Right ventricle myocardium inferior (tissue), 1 donor: ENCODE measurements at regions of chr11 and their contacts with region 1.

Region 1: GRCh38 chr11:10307442-10308207 is 2.8 kb downstream of the ADM start:
- DNase-seq: peak; percentile 92
- ATAC-seq: peak; percentile 66

Region 2: GRCh38 chr11:9613118-9613829 is 694.4 kb before region 1 on chr11:
- intact Hi-C with region 1: loop called (anchors 5 kb)
- DNase-seq: peak; percentile 96
- ATAC-seq: peak; percentile 93

Region 3: GRCh38 chr11:9861860-9862725 is 445.5 kb before region 1 on chr11:
- intact Hi-C with region 1: loop called (anchors 5 kb)
- DNase-seq: no peak
- ATAC-seq: peak; percentile 70

Region 4: DNA sequence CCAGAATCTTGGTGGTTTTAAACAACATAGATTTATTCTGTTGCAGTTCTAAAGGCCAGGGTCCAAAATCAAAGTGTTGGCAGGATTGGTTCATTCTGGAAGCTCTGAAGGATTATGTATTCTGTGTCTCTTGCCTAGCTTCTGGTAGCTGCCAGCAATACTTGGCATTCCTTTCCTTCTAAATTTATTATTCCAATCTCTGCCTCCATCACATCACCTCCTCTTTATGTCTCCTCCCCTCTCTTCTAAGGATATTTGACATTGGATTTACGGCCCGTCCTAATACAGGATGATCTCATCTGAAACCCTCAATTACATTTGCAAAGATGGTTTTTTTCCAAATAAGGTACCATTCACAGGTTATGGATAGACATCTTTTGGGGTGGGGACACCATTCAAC is 200.1 kb before region 1 on chr11:
- intact Hi-C with region 1: no loop called
- DNase-seq: no peak
- ATAC-seq: no peak

Region 5: DNA sequence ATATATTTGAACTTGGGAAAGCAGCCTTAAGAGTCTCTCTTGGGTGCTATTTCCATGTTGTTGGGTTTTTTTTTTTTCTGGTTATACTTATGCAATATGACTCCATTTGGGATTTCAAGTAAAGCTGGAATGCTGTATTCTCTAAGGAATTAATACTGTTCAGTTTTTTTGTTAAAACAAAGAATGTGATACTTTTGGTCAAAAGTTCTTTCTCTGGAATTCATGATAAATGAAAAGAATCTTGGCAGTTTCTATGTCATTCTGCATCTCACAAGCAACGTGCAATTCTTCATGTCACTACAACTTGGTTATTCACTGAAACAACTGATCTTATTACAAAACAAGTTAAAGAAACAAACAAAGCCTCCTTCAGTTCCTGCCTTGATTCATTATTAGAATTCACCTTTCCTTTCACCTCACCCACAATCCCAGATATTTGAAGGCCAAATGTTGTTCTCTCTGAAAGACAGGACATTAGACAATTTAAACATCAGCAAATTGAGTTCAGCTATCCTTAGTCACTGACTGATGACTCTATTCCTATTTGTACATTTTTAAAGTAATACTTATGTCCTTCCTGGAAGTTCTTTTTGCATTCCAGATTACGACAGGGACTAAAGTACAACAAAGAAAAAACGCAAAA is 189.8 kb before region 1 on chr11:
- intact Hi-C with region 1: loop called (anchors 5 kb)
- DNase-seq: no peak
- ATAC-seq: peak; percentile 39

Region 6: DNA sequence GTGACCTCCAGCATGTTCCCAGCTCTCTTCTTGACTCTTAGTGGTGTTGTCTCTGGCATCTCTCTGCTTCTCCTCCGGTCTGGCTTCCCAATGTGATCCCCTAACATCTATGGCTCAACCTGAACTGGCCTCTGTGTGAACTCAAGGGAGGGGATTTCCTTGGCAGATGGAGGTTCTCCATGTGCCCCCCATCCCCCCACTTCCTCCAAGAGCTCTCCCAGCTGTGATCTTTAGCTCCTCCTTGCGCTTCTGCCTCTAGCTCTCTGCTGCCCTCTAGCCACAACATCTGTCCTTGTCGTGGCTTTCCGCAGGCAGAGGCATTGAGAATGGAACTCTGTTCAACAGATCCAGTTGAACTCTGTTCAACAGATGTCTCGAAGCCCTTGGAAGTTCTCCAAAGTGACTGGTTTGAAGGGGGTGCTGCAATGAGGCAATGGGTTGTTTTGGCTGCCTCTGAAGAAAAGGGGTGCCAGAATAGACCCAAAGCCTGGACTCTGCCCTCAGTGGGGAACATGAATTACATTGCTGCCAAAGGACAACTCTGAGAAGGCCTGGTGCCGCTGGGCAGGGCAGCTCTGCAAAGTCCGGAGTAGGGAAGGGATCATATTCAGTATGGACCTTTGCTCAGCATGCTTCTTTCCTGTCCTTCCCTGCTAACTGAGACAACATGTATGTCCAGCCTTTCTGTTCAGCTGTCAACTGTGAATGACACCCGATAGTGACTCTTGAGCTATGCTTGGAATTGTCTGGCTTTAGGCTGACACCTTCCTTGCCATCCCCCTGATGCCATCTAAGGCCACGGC is 59.1 kb after region 1 on chr11:
- intact Hi-C with region 1: loop called (anchors 2 kb)
- DNase-seq: peak; percentile 82
- ATAC-seq: peak; percentile 94

Region 7: GRCh38 chr11:10522921-10523320 is 215.3 kb after region 1 on chr11:
- intact Hi-C with region 1: no loop called
- DNase-seq: no peak
- ATAC-seq: no peak